GM10248 (cell line): ENCODE measurements at regions of chr2 and their contacts with region 1.

Region 1: DNA sequence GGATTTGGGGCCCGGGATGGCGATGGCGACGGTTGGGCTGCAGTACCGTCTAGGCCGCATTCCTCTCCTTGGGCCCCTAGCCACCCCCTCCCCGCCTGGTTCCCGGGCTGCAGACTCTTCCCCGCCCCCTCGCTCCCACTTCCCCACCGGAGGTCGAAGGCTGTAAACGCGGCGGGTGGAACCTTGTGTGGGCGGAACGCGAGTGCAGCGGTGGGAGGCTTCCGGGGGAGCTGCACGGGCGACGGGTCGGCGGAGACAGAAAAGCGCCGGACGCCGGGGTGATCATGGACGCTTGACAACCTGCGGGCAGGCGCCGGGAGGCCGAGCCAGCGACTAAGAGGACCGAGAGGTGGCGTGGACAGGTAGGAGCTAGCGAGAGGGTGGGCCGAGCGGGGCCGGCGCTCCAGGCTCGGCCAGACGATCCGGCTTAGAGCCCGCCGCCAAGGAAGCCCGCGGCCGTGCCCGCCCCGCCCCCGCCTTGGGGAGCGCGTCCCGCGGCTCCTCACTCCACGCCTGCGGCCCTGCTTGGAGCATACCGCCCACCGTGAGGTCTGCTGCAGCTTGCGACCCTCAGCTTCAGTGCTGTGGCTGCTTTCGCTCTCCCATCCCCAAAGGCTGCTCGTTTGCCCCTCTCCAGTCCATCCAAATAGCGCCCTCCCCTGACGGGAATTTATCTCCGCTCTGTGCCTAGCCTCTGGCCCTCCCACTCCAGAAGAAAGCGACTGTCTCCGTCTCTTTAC is at the start of gene COPS7B:
- DNase-seq: peak; percentile 86
- CTCF ChIP-seq: peak; percentile 52

Region 2: DNA sequence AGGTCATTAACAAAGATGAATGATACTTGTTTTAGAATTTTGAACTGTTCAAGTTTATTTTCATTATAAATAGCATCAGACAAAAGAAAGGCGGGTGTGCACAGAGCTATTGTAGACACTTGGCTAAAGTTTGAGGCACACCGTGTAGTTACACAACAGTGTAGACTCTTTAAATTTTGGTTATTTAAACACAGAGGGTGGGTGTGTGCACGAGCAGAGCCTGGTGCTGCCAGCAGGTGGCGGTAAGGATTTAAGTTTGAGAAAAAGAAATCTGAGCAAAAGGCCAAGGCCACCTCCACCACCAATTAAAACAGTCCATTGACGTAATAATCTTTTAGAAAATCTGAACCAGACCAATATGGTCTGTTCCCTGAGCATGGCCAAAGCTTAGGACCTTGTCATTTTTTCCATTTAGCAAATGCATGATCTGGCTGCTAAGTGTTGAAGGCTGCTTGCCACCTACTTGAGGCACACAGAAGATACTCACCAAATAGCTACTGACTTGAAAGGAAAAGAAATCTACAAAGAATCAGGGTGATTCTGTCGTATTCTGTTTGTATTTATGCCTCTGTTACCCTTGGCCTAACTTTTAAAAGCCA is 14.2 kb after region 1 on chr2:
- CTCF ChIA-PET with region 1: interaction called, 20 read pairs
- POLR2A ChIA-PET with region 1: interaction called, 3 read pairs
- DNase-seq: peak; percentile 43
- CTCF ChIP-seq: peak; percentile 68

Region 3: DNA sequence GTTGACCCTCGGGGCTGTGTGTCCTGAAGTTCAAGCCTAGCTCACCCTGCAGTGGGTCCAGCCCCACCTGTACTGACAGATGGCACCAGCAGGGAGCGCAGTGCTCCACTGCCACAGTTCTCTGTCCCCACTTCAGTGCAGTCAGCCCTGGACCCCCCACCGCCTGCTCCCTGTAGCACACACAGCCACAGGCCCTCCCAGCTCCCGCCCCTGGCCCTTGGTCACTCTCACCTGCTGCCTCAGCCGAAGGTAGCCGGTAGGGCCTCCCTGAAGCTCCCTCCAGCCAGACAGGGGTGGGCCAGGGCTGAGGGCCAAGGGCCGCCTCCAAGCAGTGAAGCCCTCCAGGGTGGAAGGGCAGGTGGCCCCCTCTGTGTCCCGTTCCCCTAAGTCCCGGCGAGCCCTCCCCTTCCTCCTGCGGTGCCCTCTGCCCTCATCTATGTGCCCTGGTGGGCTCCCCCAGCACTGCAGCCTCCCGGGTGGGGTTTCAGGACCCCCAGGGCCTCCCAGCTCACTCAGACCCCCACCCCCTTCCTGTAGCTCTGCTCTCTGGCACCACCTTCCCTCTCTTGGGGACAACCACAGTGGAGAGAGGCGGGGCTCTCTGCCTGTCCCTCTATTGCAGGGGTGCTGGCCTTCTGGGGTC is 581.4 kb after region 1 on chr2:
- CTCF ChIA-PET with region 1: no interaction called
- POLR2A ChIA-PET with region 1: no interaction called
- DNase-seq: no peak
- CTCF ChIP-seq: no peak